ENCODE measurements at regions of chr10 and their contacts with region 1.

Region 1: DNA sequence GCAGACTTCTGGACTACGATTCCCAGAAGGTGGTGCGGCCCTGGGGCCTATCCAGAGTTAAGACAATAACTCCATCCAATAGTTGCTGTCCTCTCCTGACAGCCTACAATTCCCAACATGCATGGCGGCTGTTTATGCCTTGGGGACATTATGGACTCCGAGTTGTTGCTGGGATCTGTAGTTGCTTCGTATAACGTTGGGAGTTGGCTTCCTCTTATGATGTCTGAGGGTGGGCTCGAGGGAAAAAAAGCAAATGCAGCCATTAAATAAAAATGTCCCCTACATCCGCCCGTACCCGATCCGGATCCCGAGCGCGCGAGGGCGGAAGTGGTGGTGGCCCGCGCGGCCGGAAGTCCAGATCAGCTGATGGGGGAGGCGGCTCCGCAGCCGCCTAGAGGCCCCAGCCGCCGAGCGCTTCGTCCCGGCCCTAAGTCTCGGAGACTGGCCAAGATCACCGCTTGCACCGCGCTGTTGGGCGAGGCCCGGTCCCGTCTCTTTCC is at the start of gene ZSWIM8:
- DNase-seq: peak; percentile 94
- ATAC-seq: peak; percentile 92
- total RNA-seq, gene ZSWIM8: 45.3 TPM

Region 2: GRCh38 chr10:73743905-73744663 is 41.2 kb before region 1 on chr10 and contains the start of gene SEC24C:
- intact Hi-C with region 1: loop called (anchors 2 kb)
- DNase-seq: peak; percentile 98
- ATAC-seq: peak; percentile 96
- total RNA-seq, gene SEC24C: 46.4 TPM

Region 3: GRCh38 chr10:73810735-73811465 is 25.6 kb after region 1 on chr10:
- intact Hi-C with region 1: loop called (anchors 2 kb)
- DNase-seq: peak; percentile 77
- ATAC-seq: peak; percentile 20

Region 4: GRCh38 chr10:73824146-73824725 is 39.0 kb after region 1 on chr10:
- intact Hi-C with region 1: no loop called
- DNase-seq: no peak
- ATAC-seq: no peak